ENCODE measurements at regions of chr1 and their contacts with region 1.

Region 1: GRCh38 chr1:53945433-53946251 is at the start of gene IFT25:
- DNase-seq: peak; percentile 93 to 95
- H3K4me3 ChIP-seq: peak within 1 kb of the TSS; percentile 91
- H3K4me3 Mint-ChIP-seq: peak within 1 kb of the TSS; percentile 94
- H3K27ac Mint-ChIP-seq: peak within 1 kb of the TSS; percentile 89
- H3K4me1 ChIP-seq: peaks cover 27% of the 10 kb centered on the region
- H3K4me1 Mint-ChIP-seq: peaks cover 30% of the 10 kb centered on the region
- H3K27me3 ChIP-seq: no peaks in the 10 kb centered on the region
- H3K27me3 Mint-ChIP-seq: no peaks in the 10 kb centered on the region
- CTCF ChIP-seq: no peak
- total RNA-seq, gene IFT25: 31.7 and 35.1 TPM in 2 replicates

Region 2: GRCh38 chr1:53393325-53393792 is 552.3 kb before region 1 on chr1:
- CTCF ChIA-PET with region 1: interaction called, 10 read pairs
- POLR2A ChIA-PET with region 1: no interaction called
- intact Hi-C with region 1: no loop called
- DNase-seq: peak; percentile 56 to 82
- H3K4me3 ChIP-seq: no peak overlapping the region
- H3K4me3 Mint-ChIP-seq: no peak overlapping the region
- H3K27ac Mint-ChIP-seq: no peak overlapping the region
- H3K4me1 ChIP-seq: no peaks in the 10 kb centered on the region
- H3K4me1 Mint-ChIP-seq: no peaks in the 10 kb centered on the region
- H3K27me3 ChIP-seq: no peaks in the 10 kb centered on the region
- H3K27me3 Mint-ChIP-seq: peaks cover 5% of the 10 kb centered on the region
- CTCF ChIP-seq: peak; percentile 71 to 74

Region 3: GRCh38 chr1:53878492-53879105 is 67.0 kb before region 1 on chr1:
- CTCF ChIA-PET with region 1: interaction called, 13 read pairs
- POLR2A ChIA-PET with region 1: interaction called, 3 read pairs
- intact Hi-C with region 1: loop called (anchors 1 kb)
- DNase-seq: peak in 1 of 2 experiments; percentile 49
- H3K4me3 ChIP-seq: no peak overlapping the region
- H3K4me3 Mint-ChIP-seq: no peak overlapping the region
- H3K27ac Mint-ChIP-seq: no peak overlapping the region
- H3K4me1 ChIP-seq: no peaks in the 10 kb centered on the region
- H3K4me1 Mint-ChIP-seq: no peaks in the 10 kb centered on the region
- H3K27me3 ChIP-seq: no peaks in the 10 kb centered on the region
- H3K27me3 Mint-ChIP-seq: no peaks in the 10 kb centered on the region
- CTCF ChIP-seq: peak; percentile 41 to 44

Region 4: DNA sequence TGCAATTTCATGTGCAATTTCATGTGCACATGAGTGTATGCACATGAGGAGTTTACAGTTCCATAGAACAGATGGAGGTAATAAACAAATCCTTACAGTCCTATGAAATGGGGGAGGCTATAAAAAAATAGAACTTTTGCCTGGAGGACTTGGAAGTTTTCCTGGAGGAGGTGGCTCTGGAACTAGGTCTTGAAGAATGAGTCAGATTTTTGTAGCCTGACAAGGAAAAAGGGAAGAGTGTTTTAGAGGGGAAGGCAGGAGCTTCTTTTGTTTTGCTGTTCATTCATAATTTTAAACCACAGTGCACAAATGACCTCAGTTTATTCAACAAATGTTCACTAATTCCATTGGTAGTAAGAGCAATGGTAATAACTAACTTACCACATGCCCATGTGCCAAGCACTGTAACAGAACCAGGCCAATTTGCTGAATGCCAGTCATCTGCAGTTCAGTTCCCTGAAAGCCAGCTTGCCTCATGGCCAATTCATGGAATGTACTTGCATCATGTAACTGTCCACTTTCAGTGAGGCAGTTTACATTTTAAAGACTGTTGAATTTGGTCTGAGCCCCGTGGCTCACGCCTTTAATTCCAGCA is 48.9 kb before region 1 on chr1:
- CTCF ChIA-PET with region 1: interaction called, 4 read pairs
- POLR2A ChIA-PET with region 1: interaction called, 21 read pairs
- intact Hi-C with region 1: no loop called
- DNase-seq: no peak
- H3K4me3 ChIP-seq: no peak overlapping the region
- H3K4me3 Mint-ChIP-seq: no peak overlapping the region
- H3K27ac Mint-ChIP-seq: peak overlapping the region; percentile 53
- H3K4me1 ChIP-seq: peaks cover 20% of the 10 kb centered on the region
- H3K4me1 Mint-ChIP-seq: peaks cover 27% of the 10 kb centered on the region
- H3K27me3 ChIP-seq: no peaks in the 10 kb centered on the region
- H3K27me3 Mint-ChIP-seq: no peaks in the 10 kb centered on the region
- CTCF ChIP-seq: no peak

Region 5: DNA sequence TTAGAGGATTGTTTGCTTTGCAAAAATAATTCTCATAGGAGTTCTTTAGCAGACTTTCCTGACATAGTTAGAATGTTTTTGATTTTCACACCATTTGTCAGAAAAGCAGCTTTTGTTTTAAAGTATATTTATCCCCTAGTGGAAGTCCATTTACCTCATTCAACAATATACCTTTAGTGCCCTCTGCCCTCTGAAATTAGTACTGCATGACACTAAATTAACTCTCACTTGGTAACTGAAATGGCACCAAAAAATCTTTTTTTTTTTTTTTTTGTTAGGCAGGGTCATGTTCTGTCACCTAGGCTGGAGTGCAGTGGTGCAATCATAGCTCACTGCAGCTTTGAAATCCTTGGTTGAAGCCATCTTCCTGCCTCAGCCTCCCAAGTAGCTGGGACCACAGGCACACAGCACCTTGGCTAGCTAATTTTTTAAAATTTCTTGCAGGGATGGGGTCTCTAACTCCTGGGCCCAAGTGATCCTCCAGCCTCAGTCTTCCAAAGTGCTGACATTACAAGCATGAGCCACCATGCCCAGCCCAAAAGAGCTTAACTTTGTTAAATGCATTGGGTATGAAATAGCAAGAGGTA is 14.1 kb after region 1 on chr1:
- CTCF ChIA-PET with region 1: interaction called, 16 read pairs
- POLR2A ChIA-PET with region 1: interaction called, 7 read pairs
- intact Hi-C with region 1: no loop called
- DNase-seq: no peak
- H3K4me3 ChIP-seq: no peak overlapping the region
- H3K4me3 Mint-ChIP-seq: no peak overlapping the region
- H3K27ac Mint-ChIP-seq: no peak overlapping the region
- H3K4me1 ChIP-seq: peaks cover 27% of the 10 kb centered on the region
- H3K4me1 Mint-ChIP-seq: peaks cover 20% of the 10 kb centered on the region
- H3K27me3 ChIP-seq: no peaks in the 10 kb centered on the region
- H3K27me3 Mint-ChIP-seq: no peaks in the 10 kb centered on the region
- CTCF ChIP-seq: peak; percentile 35 to 57

Region 6: GRCh38 chr1:54095546-54096226 is 150.0 kb after region 1 on chr1:
- CTCF ChIA-PET with region 1: no interaction called
- POLR2A ChIA-PET with region 1: no interaction called
- intact Hi-C with region 1: no loop called
- DNase-seq: no peak
- H3K4me3 ChIP-seq: no peak overlapping the region
- H3K4me3 Mint-ChIP-seq: no peak overlapping the region
- H3K27ac Mint-ChIP-seq: no peak overlapping the region
- H3K4me1 ChIP-seq: peaks cover 7% of the 10 kb centered on the region; the same call in 1 of the 2 replicates
- H3K4me1 Mint-ChIP-seq: peaks cover 17% of the 10 kb centered on the region
- H3K27me3 ChIP-seq: no peaks in the 10 kb centered on the region
- H3K27me3 Mint-ChIP-seq: no peaks in the 10 kb centered on the region
- CTCF ChIP-seq: no peak

Measured in Caco-2 (cell line).